GM10248 (cell line): ENCODE measurements at regions of chr13 and their contacts with region 1.

Region 1: DNA sequence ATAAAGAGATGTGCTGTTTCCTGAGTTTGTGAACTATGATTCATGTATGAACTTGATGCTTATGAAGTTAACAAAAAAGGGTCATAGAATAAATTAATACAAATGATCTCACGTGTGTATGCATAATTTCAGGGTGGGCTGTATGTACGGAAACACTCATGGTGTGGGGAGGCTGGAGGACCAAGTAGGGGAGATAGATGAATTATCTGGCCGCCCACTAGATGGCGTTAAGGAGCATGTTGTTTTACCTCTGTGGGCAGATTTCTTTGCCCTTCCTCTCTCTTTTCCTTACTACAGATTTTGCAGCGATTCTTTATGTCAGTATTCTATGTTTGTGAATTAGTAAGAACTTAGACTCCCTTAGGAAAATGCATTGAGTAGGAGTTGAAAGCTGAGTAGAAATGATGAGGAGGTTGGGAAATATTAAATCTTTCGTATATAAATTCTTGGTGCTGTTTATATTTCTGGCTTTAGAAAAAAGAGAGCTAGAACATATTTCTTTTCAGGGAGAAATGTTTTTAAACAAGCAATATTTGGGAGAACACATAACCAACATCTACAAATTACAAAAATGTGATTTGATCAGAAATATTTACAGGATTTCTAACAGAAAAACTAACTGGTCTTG is 47.4 kb upstream of the TMTC4 start:
- DNase-seq: peak; percentile 62
- CTCF ChIP-seq: peak; percentile 68

Region 2: GRCh38 chr13:100619940-100620339 is 102.1 kb before region 1 on chr13:
- CTCF ChIA-PET with region 1: no interaction called
- POLR2A ChIA-PET with region 1: no interaction called
- DNase-seq: no peak
- CTCF ChIP-seq: no peak

Region 3: GRCh38 chr13:100707818-100708740 is 13.9 kb before region 1 on chr13:
- CTCF ChIA-PET with region 1: interaction called, 20 read pairs
- POLR2A ChIA-PET with region 1: no interaction called
- DNase-seq: no peak
- CTCF ChIP-seq: no peak